OCI-LY7 (cell line): ENCODE measurements at regions of chr13 and their contacts with region 1.

Region 1: DNA sequence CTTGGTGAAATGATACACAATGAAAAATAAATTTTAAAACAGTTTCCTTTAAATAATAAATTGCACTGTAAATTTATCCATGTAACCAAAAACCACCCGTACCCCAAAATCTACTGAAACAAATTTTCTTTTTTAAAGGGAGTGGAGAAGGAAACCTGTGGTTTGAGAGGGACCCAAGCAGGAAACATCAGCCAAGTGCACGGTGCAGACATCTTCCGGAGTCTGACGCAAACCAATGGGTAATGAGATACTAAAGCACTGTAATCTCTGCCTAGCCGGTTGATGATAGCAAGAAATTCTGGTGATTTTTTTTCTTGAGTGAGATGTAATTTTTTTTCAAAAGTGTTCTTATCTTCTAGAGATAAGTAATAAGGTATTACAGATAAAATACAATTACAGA is 115.4 kb downstream of the ABCC4 start:
- DNase-seq: no peak
- H3K4me3 ChIP-seq: no peak overlapping the region
- H3K27ac ChIP-seq: no peak overlapping the region
- H3K4me1 ChIP-seq: no peaks in the 10 kb centered on the region
- CTCF ChIP-seq: no peak

Region 2: GRCh38 chr13:95160112-95160906 is 25.5 kb before region 1 on chr13:
- CTCF ChIA-PET with region 1: no interaction called
- POLR2A ChIA-PET with region 1: no interaction called
- intact Hi-C with region 1: no loop called
- DNase-seq: no peak
- H3K4me3 ChIP-seq: no peak overlapping the region
- H3K27ac ChIP-seq: no peak overlapping the region
- H3K4me1 ChIP-seq: no peaks in the 10 kb centered on the region
- CTCF ChIP-seq: no peak

Region 3: GRCh38 chr13:95479731-95480130 is 293.9 kb after region 1 on chr13:
- CTCF ChIA-PET with region 1: no interaction called
- POLR2A ChIA-PET with region 1: interaction called, 3 read pairs
- intact Hi-C with region 1: loop called (anchors 5 kb)
- DNase-seq: no peak
- H3K4me3 ChIP-seq: no peak overlapping the region
- H3K27ac ChIP-seq: no peak overlapping the region
- H3K4me1 ChIP-seq: no peaks in the 10 kb centered on the region
- CTCF ChIP-seq: no peak